ENCODE measurements at regions of chr4 and their contacts with region 1.

Region 1: DNA sequence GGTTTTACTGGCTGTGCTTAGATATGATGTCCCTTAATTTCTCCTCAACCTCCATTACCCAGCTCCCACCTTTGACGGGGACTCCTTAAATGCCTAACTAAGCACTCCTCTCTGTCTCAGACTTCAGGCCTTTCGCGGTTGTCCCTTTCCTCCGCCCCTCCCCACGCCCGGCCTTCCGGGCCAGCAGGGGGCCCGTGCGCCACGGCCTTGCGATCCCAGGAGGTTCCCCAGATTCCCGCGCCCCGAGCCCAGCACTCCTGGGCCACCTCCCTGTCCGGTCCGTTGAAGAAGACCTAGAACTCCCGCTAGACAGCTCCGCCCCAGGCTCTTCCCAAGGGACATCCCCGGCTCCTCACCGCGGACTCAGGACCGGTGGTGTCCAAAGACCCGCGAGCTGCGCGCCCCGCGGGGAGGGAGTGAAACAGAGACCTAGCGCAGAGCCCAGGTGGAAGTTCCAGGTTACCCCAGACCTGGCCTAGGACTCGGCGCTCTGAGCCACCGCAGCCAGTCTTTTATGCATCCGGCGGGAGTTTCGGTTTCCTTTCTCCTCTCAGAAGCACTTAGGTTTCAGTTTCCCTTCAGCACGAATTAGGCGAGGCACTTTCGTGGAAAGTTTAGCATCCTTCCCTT is at the start of gene DDX60:
- DNase-seq: peak; percentile 92
- ATAC-seq: peak; percentile 96
- H3K4me3 Mint-ChIP-seq: peak within 1 kb of the TSS; percentile 85
- H3K27ac Mint-ChIP-seq: peak within 1 kb of the TSS; percentile 93
- H3K4me1 Mint-ChIP-seq: peaks cover 39% of the 10 kb centered on the region
- H3K27me3 Mint-ChIP-seq: no peaks in the 10 kb centered on the region
- CTCF ChIP-seq: peak; percentile 20
- total RNA-seq, gene DDX60: 18.6 to 21.1 TPM

Region 2: GRCh38 chr4:168304744-168305459 is 13.5 kb before region 1 on chr4:
- CTCF ChIA-PET with region 1: interaction called, 6 read pairs
- POLR2A ChIA-PET with region 1: interaction called, 11 read pairs
- intact Hi-C with region 1: no loop called
- DNase-seq: no peak
- ATAC-seq: no peak
- H3K4me3 Mint-ChIP-seq: no peak overlapping the region
- H3K27ac Mint-ChIP-seq: no peak overlapping the region
- H3K4me1 Mint-ChIP-seq: peaks cover 16% of the 10 kb centered on the region
- H3K27me3 Mint-ChIP-seq: no peaks in the 10 kb centered on the region
- CTCF ChIP-seq: no peak

Region 3: GRCh38 chr4:168480931-168481611 is 162.7 kb after region 1 on chr4:
- CTCF ChIA-PET with region 1: no interaction called
- POLR2A ChIA-PET with region 1: interaction called, 3 read pairs
- intact Hi-C with region 1: loop called (anchors 5 kb)
- DNase-seq: peak; percentile 68
- ATAC-seq: peak; percentile 73
- H3K4me3 Mint-ChIP-seq: peak overlapping the region; percentile 91
- H3K27ac Mint-ChIP-seq: peak overlapping the region; percentile 98
- H3K4me1 Mint-ChIP-seq: peaks cover 65% of the 10 kb centered on the region
- H3K27me3 Mint-ChIP-seq: no peaks in the 10 kb centered on the region
- CTCF ChIP-seq: no peak

Measured in activated CD8-positive, alpha-beta T cell treated with anti-CD3 and anti-CD28 coated beads for 36 hours (primary cell).